Activated B cell treated with CpG ODN at 0.5 μM for 24 hours (primary cell): ENCODE measurements at regions of chr7 and their contacts with region 1.

Region 1: DNA sequence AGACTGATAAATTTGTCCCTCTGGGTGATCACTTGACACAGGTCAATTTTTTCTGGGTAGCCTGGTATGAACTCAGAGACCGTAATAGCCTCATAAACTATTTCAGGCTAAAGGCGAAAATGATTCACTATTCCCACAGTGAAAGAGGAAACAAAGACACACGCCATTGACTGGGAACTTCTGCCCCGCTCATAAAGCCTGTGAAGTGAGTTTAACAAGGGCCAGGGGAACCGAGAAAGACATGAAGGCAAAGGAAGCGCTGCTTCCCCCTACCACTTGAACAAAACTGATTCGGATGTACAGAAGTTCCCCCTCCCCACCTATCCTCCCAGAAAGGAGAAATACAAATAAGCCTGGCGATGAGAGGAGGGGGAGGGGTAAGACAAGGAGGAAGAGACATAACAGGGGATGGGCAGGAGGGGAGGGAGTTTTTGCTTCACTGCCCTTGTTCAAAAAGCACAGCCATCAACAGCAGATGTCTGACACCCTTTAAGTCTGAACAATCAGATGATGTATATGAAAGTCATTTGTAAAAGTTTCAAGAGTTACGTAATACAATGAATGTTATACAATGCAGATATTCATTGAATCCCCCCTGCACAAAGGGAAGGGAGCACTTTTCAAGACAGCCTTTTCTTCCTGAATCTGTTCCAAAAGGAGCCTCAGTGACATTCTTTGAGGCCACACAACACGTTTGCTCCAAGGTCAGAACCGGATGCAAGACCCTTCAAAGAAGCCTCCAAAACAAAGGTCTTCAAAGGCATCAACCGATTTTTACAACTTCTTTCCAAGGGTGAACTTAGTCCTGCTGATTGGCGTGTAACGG is 734 bp downstream of the ABCB4 start:
- DNase-seq: peak; percentile 37
- ATAC-seq: peak; percentile 76
- H3K4me3 Mint-ChIP-seq: peak overlapping the region; percentile 89
- H3K27ac Mint-ChIP-seq: peak overlapping the region; percentile 96
- H3K4me1 Mint-ChIP-seq: peaks cover 44% of the 10 kb centered on the region
- H3K27me3 Mint-ChIP-seq: no peaks in the 10 kb centered on the region
- CTCF ChIP-seq: no peak

Region 2: GRCh38 chr7:87219545-87220025 is 255.2 kb before region 1 on chr7 and contains the start of gene TMEM243:
- CTCF ChIA-PET with region 1: no interaction called
- POLR2A ChIA-PET with region 1: interaction called, 6 read pairs
- intact Hi-C with region 1: loop called (anchors 1 kb)
- DNase-seq: peak; percentile 85
- ATAC-seq: peak; percentile 60
- H3K4me3 Mint-ChIP-seq: peak within 1 kb of the TSS; percentile 98
- H3K27ac Mint-ChIP-seq: peak within 1 kb of the TSS; percentile 99
- H3K4me1 Mint-ChIP-seq: peaks cover 51% of the 10 kb centered on the region
- H3K27me3 Mint-ChIP-seq: no peaks in the 10 kb centered on the region
- CTCF ChIP-seq: no peak
- total RNA-seq, gene TMEM243: 106 and 111 TPM in 2 replicates

Region 3: DNA sequence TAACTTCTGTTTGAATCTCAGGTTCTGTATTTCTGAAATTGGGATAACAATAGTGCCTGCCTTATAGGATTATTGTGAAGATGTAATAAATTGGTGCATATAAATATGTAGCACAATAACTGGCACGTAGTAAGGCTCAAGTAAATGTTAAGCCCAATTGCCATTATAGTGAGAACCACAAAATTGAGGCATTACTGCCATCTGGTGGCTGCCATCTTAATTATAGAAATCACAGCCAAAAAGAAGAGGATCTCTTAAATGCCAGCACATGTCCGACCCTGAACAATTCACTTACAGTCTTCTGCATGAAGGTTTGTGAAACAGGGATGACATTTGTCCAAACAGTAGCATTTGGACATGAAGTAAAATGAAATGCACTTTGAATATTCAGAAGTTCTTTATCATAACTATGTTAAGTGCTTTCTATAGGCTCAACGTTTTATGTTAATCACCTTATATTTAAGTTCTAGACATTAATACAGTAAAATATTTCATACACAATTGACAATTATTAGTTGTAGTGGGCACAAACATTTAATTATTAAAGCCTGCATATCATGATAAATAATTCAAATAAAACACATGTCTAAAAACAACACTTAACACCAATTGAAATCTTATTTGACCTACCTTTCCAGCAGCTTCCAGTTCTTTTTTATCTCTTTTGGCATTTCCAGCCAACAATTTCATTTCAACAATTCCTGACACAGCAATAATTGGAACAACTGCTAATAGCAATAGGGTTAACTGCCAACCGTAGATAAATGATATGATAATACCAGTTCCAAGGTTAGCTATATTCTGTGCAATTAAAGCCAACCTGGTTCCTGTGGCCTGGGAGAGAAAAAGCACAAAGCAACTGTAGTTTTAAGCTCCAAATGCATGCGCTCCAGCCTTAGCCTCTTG is 57.8 kb before region 1 on chr7:
- CTCF ChIA-PET with region 1: no interaction called
- POLR2A ChIA-PET with region 1: no interaction called
- intact Hi-C with region 1: loop called (anchors 2 kb)
- DNase-seq: no peak
- ATAC-seq: peak; percentile 56
- H3K4me3 Mint-ChIP-seq: no peak overlapping the region
- H3K27ac Mint-ChIP-seq: no peak overlapping the region
- H3K4me1 Mint-ChIP-seq: peaks cover 20% of the 10 kb centered on the region
- H3K27me3 Mint-ChIP-seq: no peaks in the 10 kb centered on the region
- CTCF ChIP-seq: peak; percentile 68

Region 4: GRCh38 chr7:87498893-87499292 is 24.1 kb after region 1 on chr7:
- CTCF ChIA-PET with region 1: no interaction called
- POLR2A ChIA-PET with region 1: no interaction called
- intact Hi-C with region 1: loop called (anchors 1 kb)
- DNase-seq: no peak
- ATAC-seq: peak; percentile 83
- H3K4me3 Mint-ChIP-seq: peak overlapping the region; percentile 32
- H3K27ac Mint-ChIP-seq: peak overlapping the region; percentile 77
- H3K4me1 Mint-ChIP-seq: peaks cover 25% of the 10 kb centered on the region
- H3K27me3 Mint-ChIP-seq: no peaks in the 10 kb centered on the region
- CTCF ChIP-seq: no peak

Region 5: GRCh38 chr7:87564289-87564963 is 89.7 kb after region 1 on chr7:
- CTCF ChIA-PET with region 1: no interaction called
- POLR2A ChIA-PET with region 1: no interaction called
- intact Hi-C with region 1: loop called (anchors 5 kb)
- DNase-seq: no peak
- ATAC-seq: peak; percentile 72
- H3K4me3 Mint-ChIP-seq: no peak overlapping the region
- H3K27ac Mint-ChIP-seq: no peak overlapping the region
- H3K4me1 Mint-ChIP-seq: peaks cover 5% of the 10 kb centered on the region
- H3K27me3 Mint-ChIP-seq: no peaks in the 10 kb centered on the region
- CTCF ChIP-seq: no peak

Region 6: GRCh38 chr7:87628780-87629569 is 154.2 kb after region 1 on chr7:
- CTCF ChIA-PET with region 1: no interaction called
- POLR2A ChIA-PET with region 1: interaction called, 3 read pairs
- intact Hi-C with region 1: loop called (anchors 1 kb)
- DNase-seq: peak; percentile 44
- ATAC-seq: peak; percentile 18
- H3K4me3 Mint-ChIP-seq: peak overlapping the region; percentile 83
- H3K27ac Mint-ChIP-seq: no peak overlapping the region
- H3K4me1 Mint-ChIP-seq: peaks cover 11% of the 10 kb centered on the region
- H3K27me3 Mint-ChIP-seq: peaks cover 8% of the 10 kb centered on the region
- CTCF ChIP-seq: no peak

Region 7: GRCh38 chr7:87767797-87768196 is 293.1 kb after region 1 on chr7:
- CTCF ChIA-PET with region 1: no interaction called
- POLR2A ChIA-PET with region 1: no interaction called
- intact Hi-C with region 1: no loop called
- DNase-seq: no peak
- ATAC-seq: no peak
- H3K4me3 Mint-ChIP-seq: no peak overlapping the region
- H3K27ac Mint-ChIP-seq: no peak overlapping the region
- H3K4me1 Mint-ChIP-seq: no peaks in the 10 kb centered on the region
- H3K27me3 Mint-ChIP-seq: peaks cover 8% of the 10 kb centered on the region
- CTCF ChIP-seq: no peak

Region 8: GRCh38 chr7:88219781-88220747 is 745.3 kb after region 1 on chr7 and contains the start of gene SRI:
- CTCF ChIA-PET with region 1: no interaction called
- POLR2A ChIA-PET with region 1: no interaction called
- intact Hi-C with region 1: loop called (anchors 2 kb)
- DNase-seq: peak; percentile 94
- ATAC-seq: peak; percentile 96
- H3K4me3 Mint-ChIP-seq: peak within 1 kb of the TSS; percentile 95
- H3K27ac Mint-ChIP-seq: peak within 1 kb of the TSS; percentile 92
- H3K4me1 Mint-ChIP-seq: peaks cover 25% of the 10 kb centered on the region
- H3K27me3 Mint-ChIP-seq: no peaks in the 10 kb centered on the region
- CTCF ChIP-seq: peak; percentile 73
- total RNA-seq, gene SRI: 97.4 and 101 TPM in 2 replicates